Common myeloid progenitor, CD34-positive (primary cell): ENCODE measurements at regions of chr2 and their contacts with region 1.

Region 1: GRCh38 chr2:121076885-121077549 is 208.0 kb downstream of the TFCP2L1 start:
- DNase-seq: peak; percentile 55 to 63 (median 61)
- H3K4me3 ChIP-seq: no peak overlapping the region
- H3K27ac ChIP-seq: no peak overlapping the region
- H3K4me1 ChIP-seq: no peaks in the 10 kb centered on the region
- H3K27me3 ChIP-seq: peaks cover 0 to 52% (median 29%) of the 10 kb centered on the region in 5 experiments

Region 2: DNA sequence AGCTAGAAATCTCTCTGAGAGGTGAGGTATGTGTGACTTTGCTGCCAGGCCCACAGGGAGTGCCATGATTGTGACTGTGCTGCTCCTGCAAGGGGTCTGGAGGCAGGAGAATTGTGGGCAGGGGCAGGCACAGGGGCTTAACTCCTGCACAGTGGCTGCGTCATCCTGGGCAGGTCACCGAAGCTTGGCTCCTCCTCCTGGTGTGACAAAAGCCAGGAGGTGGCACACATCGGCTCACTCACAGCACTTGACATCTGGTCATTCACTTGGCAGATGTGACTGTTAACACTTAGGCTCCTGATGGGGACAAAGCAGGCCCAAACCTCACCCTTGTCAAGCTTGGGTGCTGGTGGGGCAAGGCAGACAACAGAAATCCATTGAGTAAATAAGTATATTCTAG is 377.7 kb before region 1 on chr2:
- CTCF ChIA-PET with region 1: interaction called, 29 read pairs
- POLR2A ChIA-PET with region 1: interaction called, 6 read pairs
- DNase-seq: no peak
- H3K4me3 ChIP-seq: no peak overlapping the region
- H3K27ac ChIP-seq: no peak overlapping the region
- H3K4me1 ChIP-seq: peaks cover 0 to 15% (median 0%) of the 10 kb centered on the region in 4 experiments
- H3K27me3 ChIP-seq: peaks cover 6 to 57% (median 10%) of the 10 kb centered on the region in 5 experiments

Region 3: DNA sequence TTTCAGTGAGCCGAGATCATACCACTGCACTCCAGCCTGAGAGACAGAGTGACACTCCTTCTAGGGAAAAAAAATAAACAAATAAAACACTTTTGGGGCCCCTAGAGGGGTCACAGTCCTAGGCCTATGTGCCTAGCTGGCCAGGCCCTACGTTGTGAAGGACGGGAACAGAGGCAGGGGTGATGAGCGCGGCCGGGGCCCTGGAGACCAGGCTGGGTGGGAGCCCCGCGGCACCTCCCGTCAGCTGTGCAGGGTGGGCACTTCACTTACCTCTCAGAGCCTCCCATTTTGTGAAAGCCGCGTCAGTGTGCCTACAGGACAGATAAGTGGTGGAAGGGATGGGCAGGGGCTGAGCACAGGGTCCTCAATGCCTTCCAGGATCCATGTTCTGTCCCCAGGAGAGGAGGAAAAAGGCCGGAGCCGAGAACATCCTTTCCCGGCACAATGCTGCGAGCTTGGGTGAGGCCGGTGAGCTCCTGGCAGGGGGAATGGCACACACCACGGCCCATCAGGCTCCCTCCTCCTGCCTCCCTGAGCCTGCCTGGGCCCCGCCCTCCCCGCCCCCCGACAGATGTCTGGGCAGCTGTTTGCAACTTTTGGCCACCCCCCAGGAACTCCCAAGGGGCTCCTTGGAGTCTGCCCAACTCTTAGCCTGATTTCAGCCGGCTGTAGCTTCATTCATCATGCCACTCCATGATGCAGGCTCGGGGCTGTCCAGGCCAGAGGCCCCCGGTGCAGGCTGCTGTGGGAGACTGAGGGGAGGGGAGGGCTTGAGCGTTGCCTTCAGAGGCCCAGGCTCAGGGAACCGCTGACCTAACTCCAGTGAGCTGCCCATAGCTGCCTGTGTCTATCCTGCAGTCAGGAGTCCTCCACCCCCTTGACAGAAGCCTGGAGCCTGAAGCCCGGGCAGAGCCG is 11.5 kb after region 1 on chr2:
- CTCF ChIA-PET with region 1: interaction called, 62 read pairs
- POLR2A ChIA-PET with region 1: interaction called, 3 read pairs
- DNase-seq: no peak
- H3K4me3 ChIP-seq: no peak overlapping the region
- H3K27ac ChIP-seq: no peak overlapping the region
- H3K4me1 ChIP-seq: no peaks in the 10 kb centered on the region
- H3K27me3 ChIP-seq: peaks cover 0 to 4% (median 0%) of the 10 kb centered on the region in 5 experiments

Region 4: GRCh38 chr2:121095257-121096080 is 18.5 kb after region 1 on chr2:
- CTCF ChIA-PET with region 1: interaction called, 62 read pairs
- POLR2A ChIA-PET with region 1: no interaction called
- DNase-seq: peak; percentile 43 to 67 (median 61)
- H3K4me3 ChIP-seq: no peak overlapping the region
- H3K27ac ChIP-seq: no peak overlapping the region
- H3K4me1 ChIP-seq: no peaks in the 10 kb centered on the region
- H3K27me3 ChIP-seq: peaks cover 0 to 5% (median 1%) of the 10 kb centered on the region in 5 experiments